Sigmoid colon (tissue), 7 donors: ENCODE measurements at regions of chrX and their contacts with region 1.

Region 1: DNA sequence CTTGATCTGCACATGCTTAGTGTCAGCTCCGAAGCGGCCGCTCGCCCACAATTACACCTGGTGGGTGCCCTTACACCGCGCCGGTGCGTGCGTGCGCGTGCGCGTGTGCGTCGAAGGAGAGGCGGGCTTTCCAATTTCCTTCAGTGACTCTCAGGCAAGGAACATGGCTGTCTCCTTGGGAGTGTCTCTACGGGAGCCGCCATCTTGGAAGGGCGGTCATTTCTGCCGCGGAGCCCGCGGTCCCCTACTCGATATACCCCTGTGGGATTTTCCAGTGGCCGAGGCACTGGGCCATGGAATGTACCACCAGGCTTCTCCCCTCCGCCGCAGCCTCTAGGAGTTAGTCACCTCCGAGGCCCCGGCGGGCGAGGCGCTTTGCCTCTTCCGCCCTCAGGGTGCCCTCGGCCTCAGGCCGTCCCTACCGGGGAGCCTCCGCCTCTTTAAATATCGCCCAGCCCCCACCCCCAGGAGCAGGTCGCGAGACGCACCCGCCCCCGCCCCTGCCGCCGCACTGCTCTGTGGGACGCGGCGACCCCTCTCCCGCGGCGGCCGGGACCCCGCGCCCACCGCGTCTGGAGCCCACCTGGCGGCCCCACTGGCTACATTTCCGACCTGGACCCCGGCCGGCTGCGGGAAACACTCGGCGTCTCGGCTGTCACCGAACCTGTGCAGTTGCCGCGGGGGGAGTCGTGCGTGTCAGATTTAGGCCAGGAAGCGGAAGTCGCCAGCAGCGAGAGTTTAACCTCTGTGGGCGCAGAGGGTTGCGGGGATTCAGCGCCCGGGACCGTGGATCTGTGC is at the start of gene ZNF41:
- DNase-seq: peak; percentile 86
- H3K4me3 ChIP-seq: peak within 1 kb of the TSS; percentile 68 to 89 (median 76)
- H3K27ac ChIP-seq: peak within 1 kb of the TSS; percentile 91 to 96 (median 96)
- H3K4me1 ChIP-seq: peaks cover 0 to 20% (median 0%) of the 10 kb centered on the region in 4 donors
- H3K27me3 ChIP-seq: no peaks in the 10 kb centered on the region
- CTCF ChIP-seq: no peak
- EP300 ChIP-seq: no peak
- POLR2A ChIP-seq: no peak
- total RNA-seq, gene ZNF41: 4.3 to 8.4 (median 7.4) TPM

Region 2: DNA sequence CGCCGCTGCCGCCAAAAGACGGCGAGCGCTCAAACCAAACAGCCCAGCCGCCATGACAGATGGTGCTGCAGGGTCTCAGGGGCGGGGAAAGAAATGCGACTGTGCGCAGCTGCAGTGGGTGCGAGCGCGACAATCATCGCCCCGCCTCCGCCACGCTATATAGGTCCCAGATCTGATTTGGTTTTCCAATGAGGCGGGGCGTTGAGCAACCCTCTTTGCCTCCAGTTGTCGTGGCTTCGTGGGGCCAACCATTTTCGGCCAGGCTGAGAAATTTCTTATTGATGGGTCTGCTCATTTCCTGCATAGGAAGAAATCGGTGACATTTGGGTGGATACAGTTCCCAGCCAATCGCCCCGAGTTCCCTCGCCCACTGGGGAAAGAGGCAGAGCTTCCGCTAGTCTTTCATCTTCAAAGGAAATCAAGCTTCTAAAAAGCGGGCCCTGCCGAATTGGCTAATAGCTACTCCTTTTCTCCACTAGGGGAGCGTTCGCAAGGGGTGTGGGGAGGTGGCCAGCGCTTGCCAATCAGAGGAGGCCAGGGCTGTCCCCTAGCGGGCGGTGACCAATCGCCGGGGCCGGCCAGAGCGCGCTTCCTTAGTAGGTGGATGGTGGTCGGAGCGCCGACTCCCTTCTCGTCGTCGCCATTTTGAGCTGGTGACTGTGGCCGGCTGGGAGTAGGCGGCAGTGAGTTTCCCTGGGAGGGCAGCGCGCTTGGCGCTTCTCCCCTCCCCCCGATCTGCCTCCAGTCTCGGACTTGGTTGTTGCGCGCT is 337.9 kb before region 1 on chrX and contains the starts of genes NDUFB11 and RBM10:
- intact Hi-C with region 1: loop called (anchors 10 kb)
- DNase-seq: peak; percentile 98
- H3K4me3 ChIP-seq: peak within 1 kb of the TSS; percentile 62 to 69 (median 68)
- H3K27ac ChIP-seq: peak within 1 kb of the TSS; percentile 92 to 96 (median 94)
- H3K4me1 ChIP-seq: peaks cover 0 to 30% (median 18%) of the 10 kb centered on the region in 4 donors
- H3K27me3 ChIP-seq: no peaks in the 10 kb centered on the region
- CTCF ChIP-seq: peak; percentile 70 to 93 (median 82)
- EP300 ChIP-seq: no peak
- POLR2A ChIP-seq: peak; percentile 62 to 67
- total RNA-seq, gene NDUFB11: 64.3 to 103 (median 82.8) TPM
- total RNA-seq, gene RBM10: 17.1 to 28.0 (median 22.0) TPM

Region 3: GRCh38 chrX:47523297-47523696 is 40.6 kb after region 1 on chrX:
- intact Hi-C with region 1: loop called (anchors 2 kb)
- DNase-seq: peak; percentile 90
- H3K4me3 ChIP-seq: peak overlapping the region; percentile 29 to 60 (median 52)
- H3K27ac ChIP-seq: peak overlapping the region in 2 of 4 donors; percentile 19 to 42
- H3K4me1 ChIP-seq: peaks cover 0 to 6% (median 0%) of the 10 kb centered on the region in 4 donors
- H3K27me3 ChIP-seq: no peaks in the 10 kb centered on the region
- CTCF ChIP-seq: peak; percentile 42 to 67 (median 63)
- EP300 ChIP-seq: no peak
- POLR2A ChIP-seq: no peak

Region 4: DNA sequence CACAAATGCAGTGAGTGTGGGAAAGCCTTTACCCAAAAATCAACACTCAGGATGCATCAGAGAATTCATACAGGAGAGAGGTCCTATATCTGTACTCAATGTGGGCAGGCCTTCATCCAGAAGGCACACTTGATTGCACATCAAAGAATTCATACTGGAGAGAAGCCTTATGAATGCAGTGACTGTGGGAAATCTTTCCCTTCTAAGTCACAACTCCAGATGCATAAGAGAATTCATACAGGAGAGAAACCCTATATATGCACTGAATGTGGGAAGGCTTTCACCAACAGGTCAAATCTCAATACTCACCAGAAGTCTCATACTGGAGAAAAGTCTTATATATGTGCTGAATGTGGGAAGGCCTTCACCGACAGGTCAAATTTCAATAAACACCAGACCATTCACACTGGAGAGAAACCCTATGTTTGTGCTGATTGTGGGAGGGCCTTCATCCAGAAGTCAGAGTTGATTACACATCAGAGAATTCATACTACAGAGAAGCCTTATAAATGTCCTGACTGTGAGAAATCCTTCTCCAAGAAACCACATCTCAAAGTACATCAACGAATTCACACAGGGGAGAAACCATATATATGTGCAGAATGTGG is 433.3 kb after region 1 on chrX:
- intact Hi-C with region 1: no loop called
- DNase-seq: no peak
- H3K4me3 ChIP-seq: no peak overlapping the region
- H3K27ac ChIP-seq: no peak overlapping the region
- H3K4me1 ChIP-seq: no peaks in the 10 kb centered on the region
- H3K27me3 ChIP-seq: no peaks in the 10 kb centered on the region
- CTCF ChIP-seq: no peak
- EP300 ChIP-seq: no peak
- POLR2A ChIP-seq: no peak